GM13977 (cell line): ENCODE measurements at regions of chr1 and their contacts with region 1.

Region 1: DNA sequence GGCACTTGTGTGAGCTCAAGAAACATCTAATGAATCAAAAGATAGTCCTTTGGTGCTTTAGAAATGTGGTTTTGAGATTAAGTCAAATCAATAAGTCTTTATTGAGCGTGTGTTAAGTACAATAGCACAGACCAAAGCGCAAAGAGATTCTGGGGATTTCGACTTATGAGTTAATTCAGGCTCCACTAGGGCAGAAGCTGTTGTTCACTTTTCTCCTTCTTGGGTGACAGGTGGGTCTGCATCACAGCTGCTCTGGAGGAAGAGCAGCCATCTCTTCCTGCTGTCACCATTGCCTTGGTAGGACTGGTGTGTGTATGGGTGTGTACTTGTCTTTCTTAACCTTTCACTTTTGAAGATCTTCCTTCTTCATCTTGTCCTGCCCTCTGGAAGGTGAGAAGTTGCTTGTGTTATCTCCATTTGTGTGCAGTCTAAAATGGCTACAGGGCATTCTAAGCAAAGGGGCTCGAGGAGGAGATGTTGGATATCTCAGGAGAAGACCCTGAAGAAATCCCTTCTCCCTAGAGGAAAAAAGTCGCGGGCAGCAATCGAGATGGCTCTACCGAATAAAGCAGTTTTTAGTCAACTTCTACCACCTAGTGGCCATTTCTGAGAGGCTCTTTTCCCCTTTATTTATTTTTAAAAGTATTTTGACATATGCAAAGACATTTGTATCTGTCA is 22.9 kb upstream of the DISC1 start:
- DNase-seq: peak; percentile 43
- CTCF ChIP-seq: peak; percentile 63

Region 2: DNA sequence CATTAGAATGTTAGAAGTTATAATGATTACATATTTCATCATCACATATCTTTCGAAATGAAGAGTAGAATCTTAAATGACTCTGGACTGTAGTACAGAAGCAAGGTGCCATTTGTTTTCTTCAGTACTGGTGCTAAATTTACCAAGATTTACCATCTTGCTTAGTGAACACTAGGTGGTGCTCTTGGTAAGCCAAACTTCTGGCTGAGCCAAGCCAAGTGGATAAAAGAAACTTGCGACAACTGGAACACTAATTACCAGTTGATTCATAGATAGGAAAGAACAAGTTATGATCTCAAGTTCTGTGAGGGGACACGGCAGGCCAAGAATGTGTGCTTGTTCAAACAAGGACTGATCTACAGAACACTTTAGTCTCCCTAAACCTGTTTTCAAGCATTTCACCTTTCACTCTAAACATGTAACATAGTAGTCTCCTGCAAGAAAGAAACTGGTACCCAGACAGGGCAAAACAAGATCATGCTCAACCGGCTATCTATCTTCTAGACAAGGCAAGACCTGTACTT is 245.8 kb before region 1 on chr1:
- in situ Hi-C with region 1: loop called (anchors 10 kb)
- DNase-seq: peak; percentile 63
- CTCF ChIP-seq: peak; percentile 76